ENCODE measurements at regions of chr2 and their contacts with region 1.

Region 1: GRCh38 chr2:128321784-128322714 is 3.4 kb upstream of the HS6ST1 start:
- DNase-seq: peak; percentile 76 to 91 (median 87)
- H3K4me3 ChIP-seq: peak overlapping the region; percentile 42 to 81 (median 66)
- H3K27ac ChIP-seq: peak overlapping the region in 54 of 59 donors; percentile 9 to 92 (median 74)
- H3K27me3 ChIP-seq: no peaks in the 10 kb centered on the region
- CTCF ChIP-seq: peak; percentile 74 to 100 (median 97)

Region 2: DNA sequence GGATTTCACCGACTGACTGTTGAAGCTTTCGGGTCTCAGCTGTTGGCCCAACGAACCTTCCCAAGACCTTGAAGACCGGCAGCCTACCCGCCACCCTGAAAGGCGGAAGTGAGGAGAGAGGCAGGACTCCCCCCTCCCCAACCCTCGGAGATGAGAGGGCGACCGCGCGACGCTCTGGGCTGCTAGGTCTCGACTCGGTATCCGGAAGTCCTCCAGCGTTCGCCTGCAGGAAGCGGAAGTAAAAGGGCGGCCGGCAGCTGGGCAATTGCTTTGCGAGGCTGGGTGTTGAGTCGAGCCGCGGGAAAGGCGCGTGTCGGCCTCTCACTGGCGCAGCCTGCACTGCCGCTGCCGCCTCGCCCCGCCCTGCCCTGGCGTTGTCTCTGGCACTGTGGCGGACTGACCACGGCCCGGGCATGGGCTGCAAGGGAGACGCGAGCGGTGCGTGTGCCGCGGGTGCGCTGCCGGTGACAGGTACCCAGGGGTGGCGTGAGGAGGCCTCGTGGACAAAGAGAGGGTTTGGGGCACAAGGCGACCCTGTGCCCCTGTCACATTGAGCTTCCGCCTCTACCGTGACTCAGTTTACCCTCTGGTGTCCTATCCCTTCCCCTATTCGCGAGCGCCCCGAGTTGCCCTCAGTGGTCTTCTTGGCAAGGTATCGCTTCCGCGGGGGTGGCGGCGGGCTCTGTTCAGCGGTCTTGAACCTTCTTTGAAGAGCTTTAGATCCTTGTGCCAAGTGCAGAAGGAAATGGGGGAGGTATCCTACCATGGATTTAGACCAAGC is 230.9 kb before region 1 on chr2 and contains the start of gene UGGT1:
- intact Hi-C with region 1: loop called in 1 of 2 experiments (anchors 5 kb)
- DNase-seq: peak; percentile 89 to 97 (median 94)
- H3K4me3 ChIP-seq: peak within 1 kb of the TSS; percentile 60 to 100 (median 94)
- H3K27ac ChIP-seq: peak within 1 kb of the TSS; percentile 13 to 93 (median 80)
- H3K27me3 ChIP-seq: no peaks in the 10 kb centered on the region
- CTCF ChIP-seq: peak in 38 of 56 donors; percentile 9 to 57 (median 34)
- total RNA-seq, gene UGGT1: 23.5 to 46.5 (median 33.1) TPM

Region 3: GRCh38 chr2:128232965-128233789 is 88.9 kb before region 1 on chr2:
- intact Hi-C with region 1: loop called in 1 of 2 experiments (anchors 2 kb)
- DNase-seq: peak; percentile 81 to 93 (median 88)
- H3K4me3 ChIP-seq: peak overlapping the region; percentile 48 to 92 (median 78)
- H3K27ac ChIP-seq: peak overlapping the region in 55 of 59 donors; percentile 8 to 91 (median 78)
- H3K27me3 ChIP-seq: no peaks in the 10 kb centered on the region
- CTCF ChIP-seq: peak; percentile 64 to 96 (median 90)

Region 4: DNA sequence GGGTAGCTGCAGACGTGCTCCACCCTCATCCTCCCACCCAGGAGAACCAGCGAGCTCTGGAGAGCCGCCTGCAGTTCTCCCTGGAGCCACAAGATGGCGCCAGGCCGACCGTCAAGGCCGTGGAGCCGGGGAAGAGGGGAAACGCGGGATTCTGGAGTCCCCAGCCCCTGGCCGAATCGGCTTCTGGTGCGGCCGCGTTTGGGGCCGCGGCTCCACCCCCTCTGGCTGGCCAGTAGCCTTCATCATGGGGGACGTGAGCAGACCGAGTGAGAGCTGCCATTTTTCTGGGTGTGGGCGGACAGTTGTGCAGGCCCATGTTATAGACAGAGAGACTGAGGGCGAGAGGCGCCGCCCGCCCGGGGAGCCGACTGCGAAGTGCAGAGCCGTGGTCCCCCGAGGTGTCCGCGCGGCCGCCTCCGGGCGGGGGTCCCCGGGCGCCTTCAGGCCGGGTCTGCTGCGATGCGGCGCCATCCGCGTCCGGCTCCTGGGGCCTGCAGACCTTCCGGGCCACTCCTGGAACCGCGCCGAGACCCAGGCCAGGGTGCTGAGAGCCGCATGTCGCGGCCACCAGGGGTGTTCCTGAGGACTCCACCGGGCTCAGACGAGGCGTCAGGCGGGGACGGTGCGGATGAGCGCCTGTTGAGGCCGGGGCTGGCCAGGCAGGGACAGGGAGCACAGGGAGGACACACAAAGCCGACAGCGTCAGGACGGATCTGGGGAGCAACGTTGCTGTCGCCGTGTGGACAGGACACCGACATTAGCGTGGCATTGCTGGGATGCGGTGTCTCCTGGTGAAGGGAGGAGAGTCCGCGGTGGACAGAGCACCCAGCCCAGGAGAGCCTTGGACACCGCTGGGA is 414.9 kb after region 1 on chr2:
- intact Hi-C with region 1: loop called (anchors 10 kb)
- DNase-seq: peak; percentile 68 to 85 (median 80)
- H3K4me3 ChIP-seq: peak overlapping the region in 58 of 59 donors; percentile 9 to 63 (median 49)
- H3K27ac ChIP-seq: peak overlapping the region in 18 of 59 donors; percentile 0 to 83 (median 36)
- H3K27me3 ChIP-seq: no peaks in the 10 kb centered on the region
- CTCF ChIP-seq: peak; percentile 82 to 99 (median 96)

Region 5: GRCh38 chr2:129877289-129877779 is 1555.3 kb after region 1 on chr2:
- intact Hi-C with region 1: loop called (anchors 10 kb)
- DNase-seq: peak; percentile 88 to 95 (median 94)
- H3K4me3 ChIP-seq: peak overlapping the region; percentile 53 to 95 (median 77)
- H3K27ac ChIP-seq: peak overlapping the region; percentile 27 to 96 (median 86)
- H3K27me3 ChIP-seq: no peaks in the 10 kb centered on the region
- CTCF ChIP-seq: peak in 1 of 56 donors; percentile 10